ENCODE measurements at regions of chr11 and their contacts with region 1.

Region 1: DNA sequence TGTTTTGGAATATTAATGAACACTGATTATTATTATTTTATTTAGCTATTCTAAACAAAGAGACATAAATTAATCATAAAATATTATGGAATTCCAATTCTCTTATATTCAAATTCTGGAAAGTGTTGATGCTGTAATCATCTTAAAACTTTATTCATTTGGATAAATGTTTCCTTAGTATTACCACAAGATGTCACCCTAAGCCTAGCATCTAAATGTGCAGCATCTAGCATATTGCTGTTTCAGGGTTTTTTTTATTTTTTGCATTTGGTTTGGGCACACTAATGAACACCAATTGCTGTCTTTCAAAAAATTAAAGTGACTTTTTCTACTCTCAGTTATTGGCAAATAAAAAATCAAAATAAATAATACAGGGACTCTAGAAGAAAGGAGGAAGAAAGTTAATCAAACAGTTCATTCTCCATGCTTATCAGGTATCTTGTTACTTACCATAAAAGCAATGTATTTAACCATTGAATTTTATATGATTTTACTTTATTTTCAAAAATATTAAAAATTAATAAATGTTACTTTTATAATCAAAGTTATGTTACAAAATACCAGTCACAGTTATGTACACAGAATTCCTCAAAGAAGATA is 31.8 kb downstream of the DLG2 start:
- DNase-seq: peak; percentile 3
- ATAC-seq: peak; percentile 76
- H3K4me3 ChIP-seq: no peak overlapping the region
- H3K27ac ChIP-seq: no peak overlapping the region
- H3K4me1 ChIP-seq: no peaks in the 10 kb centered on the region
- H3K27me3 ChIP-seq: no peaks in the 10 kb centered on the region
- CTCF ChIP-seq: peak; percentile 32 to 70 (median 45); a peak in 5 of 6 replicates
- EP300 ChIP-seq: no peak
- POLR2A ChIP-seq: no peak
- RAD21 ChIP-seq: peak; percentile 92

Region 2: GRCh38 chr11:84780689-84781293 is 814.6 kb before region 1 on chr11:
- CTCF ChIA-PET with region 1: interaction called, 7 read pairs
- POLR2A ChIA-PET with region 1: no interaction called
- RAD21 ChIA-PET with region 1: interaction called, 7 read pairs
- SMC1A ChIA-PET with region 1: interaction called, 3 read pairs
- in situ Hi-C with region 1: no loop called
- intact Hi-C with region 1: loop called (anchors 2 kb)
- DNase-seq: no peak
- ATAC-seq: peak; percentile 42; the same call in 2 of the 3 replicates
- H3K4me3 ChIP-seq: no peak overlapping the region
- H3K27ac ChIP-seq: no peak overlapping the region
- H3K4me1 ChIP-seq: no peaks in the 10 kb centered on the region
- H3K27me3 ChIP-seq: no peaks in the 10 kb centered on the region
- CTCF ChIP-seq: peak; percentile 35 to 44 (median 36); a peak in 5 of 6 replicates
- EP300 ChIP-seq: no peak
- POLR2A ChIP-seq: no peak
- RAD21 ChIP-seq: peak; percentile 52

Region 3: DNA sequence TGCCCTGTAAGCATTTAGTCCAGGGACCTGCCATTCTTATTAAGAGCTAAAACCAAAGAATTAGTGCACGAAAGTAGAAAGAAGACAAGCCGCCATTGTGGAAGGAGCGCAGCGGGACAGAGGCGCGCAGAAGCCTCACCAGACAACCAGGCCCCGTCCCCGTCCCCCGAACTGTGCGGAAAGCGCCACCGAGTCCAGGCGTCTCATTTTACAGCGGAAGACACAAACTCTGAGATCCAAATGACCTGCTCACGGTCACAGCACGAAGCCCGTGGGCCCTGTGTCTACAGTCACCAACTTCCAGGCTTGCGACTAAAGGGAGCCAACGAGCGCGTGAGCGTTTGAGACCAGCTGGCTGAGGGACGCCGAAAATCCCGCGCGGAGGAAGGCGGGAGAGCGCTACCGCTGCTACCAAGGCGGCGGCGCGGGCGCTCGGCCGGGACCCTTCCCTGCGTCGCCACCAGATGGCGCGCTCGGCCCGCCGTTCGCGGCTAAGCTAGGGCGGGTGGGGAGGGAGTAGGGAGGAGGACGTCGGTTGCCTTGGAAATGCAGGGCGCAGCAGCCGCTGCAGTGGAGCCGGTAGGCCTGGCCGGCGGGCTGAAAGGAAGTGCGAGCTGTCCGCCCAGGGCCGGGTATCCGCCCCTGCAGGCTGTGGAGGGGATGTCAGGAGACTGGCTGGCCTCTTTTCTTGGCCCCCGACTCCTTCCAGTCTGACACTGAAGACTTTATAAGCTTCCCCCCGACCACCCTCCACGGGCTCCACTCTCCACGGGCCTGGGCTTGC is 259.4 kb after region 1 on chr11:
- CTCF ChIA-PET with region 1: no interaction called
- POLR2A ChIA-PET with region 1: no interaction called
- RAD21 ChIA-PET with region 1: interaction called, 3 read pairs
- SMC1A ChIA-PET with region 1: no interaction called
- in situ Hi-C with region 1: no loop called
- intact Hi-C with region 1: loop called (anchors 1 kb)
- DNase-seq: peak; percentile 57
- ATAC-seq: peak; percentile 100
- H3K4me3 ChIP-seq: peak overlapping the region; percentile 75
- H3K27ac ChIP-seq: peak overlapping the region; percentile 27; the same call in 1 of the 2 replicates
- H3K4me1 ChIP-seq: peaks cover 8% of the 10 kb centered on the region
- H3K27me3 ChIP-seq: no peaks in the 10 kb centered on the region
- CTCF ChIP-seq: peak; percentile 77 to 95 (median 82)
- EP300 ChIP-seq: no peak
- POLR2A ChIP-seq: peak; percentile 71
- RAD21 ChIP-seq: peak; percentile 83

Region 4: GRCh38 chr11:86418917-86419316 is 823.5 kb after region 1 on chr11:
- CTCF ChIA-PET with region 1: no interaction called
- POLR2A ChIA-PET with region 1: no interaction called
- RAD21 ChIA-PET with region 1: no interaction called
- SMC1A ChIA-PET with region 1: no interaction called
- in situ Hi-C with region 1: no loop called
- intact Hi-C with region 1: loop called (anchors 10 kb)
- DNase-seq: no peak
- ATAC-seq: peak; percentile 83
- H3K4me3 ChIP-seq: no peak overlapping the region
- H3K27ac ChIP-seq: no peak overlapping the region
- H3K4me1 ChIP-seq: no peaks in the 10 kb centered on the region; the same call in 1 of the 2 replicates
- H3K27me3 ChIP-seq: no peaks in the 10 kb centered on the region
- CTCF ChIP-seq: peak; percentile 18 to 48 (median 24); a peak in 4 of 6 replicates
- EP300 ChIP-seq: no peak
- POLR2A ChIP-seq: no peak
- RAD21 ChIP-seq: peak; percentile 50; the same call in 1 of the 2 replicates